HCT116 (cell line): ENCODE measurements at regions of chr2 and their contacts with region 1.

Region 1: DNA sequence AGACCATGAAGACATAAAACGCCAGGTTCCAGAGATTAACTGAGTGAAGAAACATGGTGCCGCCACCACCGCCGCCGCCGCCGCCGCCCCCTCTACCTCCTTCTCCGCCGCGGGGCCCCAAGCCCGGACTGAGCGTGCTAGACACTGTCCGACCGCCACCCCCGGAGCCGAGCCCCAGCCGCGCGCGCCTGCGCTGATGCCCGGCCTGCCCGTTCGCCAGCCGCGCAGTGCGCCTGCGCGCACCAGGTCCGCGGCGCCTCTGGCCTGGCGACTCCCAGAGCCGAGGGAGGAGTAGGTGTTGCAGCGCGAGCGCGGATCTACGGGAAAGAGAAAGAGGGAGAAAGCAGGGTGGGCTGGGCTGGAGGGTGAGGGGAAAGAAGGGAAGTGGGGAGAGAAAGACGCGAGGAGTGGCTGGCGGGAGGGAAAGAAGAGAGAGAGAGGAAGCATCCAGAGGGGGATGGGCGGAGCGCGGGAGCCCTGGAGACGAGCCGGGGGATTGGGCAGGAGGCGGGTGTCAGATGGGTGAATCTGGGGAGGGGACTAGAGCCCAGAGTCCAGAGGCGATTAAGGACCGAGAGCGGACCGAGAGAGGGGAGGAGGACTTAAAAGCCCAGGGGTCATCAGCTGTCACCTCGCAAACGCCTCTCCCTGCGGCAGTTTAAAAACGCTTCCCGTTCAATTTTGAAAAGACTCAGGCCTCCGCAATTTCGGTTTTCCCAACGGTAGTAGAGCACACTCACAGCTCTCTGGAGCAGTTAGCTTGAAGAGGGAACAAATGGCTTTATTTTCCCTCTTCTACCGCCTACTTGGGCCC is at the start of gene PGAP1:
- DNase-seq: peak; percentile 69
- ATAC-seq: peak; percentile 96
- H3K4me3 ChIP-seq: peak within 1 kb of the TSS; percentile 79 to 80
- H3K27ac ChIP-seq: peak within 1 kb of the TSS; percentile 74
- H3K4me1 ChIP-seq: peaks cover 0 to 14% of the 10 kb centered on the region in 2 experiments; a peak in 2 of 4 replicates
- H3K27me3 ChIP-seq: no peaks in the 10 kb centered on the region
- CTCF ChIP-seq: no peak
- POLR2A ChIP-seq: peak; percentile 81
- RAD21 ChIP-seq: no peak
- total RNA-seq, gene PGAP1: 7.1 TPM

Region 2: GRCh38 chr2:196758474-196759377 is 168.0 kb before region 1 on chr2:
- CTCF ChIA-PET with region 1: no interaction called
- POLR2A ChIA-PET with region 1: no interaction called
- RAD21 ChIA-PET with region 1: no interaction called
- intact Hi-C with region 1: no loop called
- DNase-seq: no peak
- ATAC-seq: peak; percentile 54; the same call in 1 of the 2 replicates
- H3K4me3 ChIP-seq: no peak overlapping the region
- H3K27ac ChIP-seq: no peak overlapping the region
- H3K4me1 ChIP-seq: no peaks in the 10 kb centered on the region
- H3K27me3 ChIP-seq: no peaks in the 10 kb centered on the region
- CTCF ChIP-seq: peak in 2 of 3 experiments; percentile 38 to 52; a peak in 3 of 6 replicates
- POLR2A ChIP-seq: no peak
- RAD21 ChIP-seq: peak; percentile 61

Region 3: DNA sequence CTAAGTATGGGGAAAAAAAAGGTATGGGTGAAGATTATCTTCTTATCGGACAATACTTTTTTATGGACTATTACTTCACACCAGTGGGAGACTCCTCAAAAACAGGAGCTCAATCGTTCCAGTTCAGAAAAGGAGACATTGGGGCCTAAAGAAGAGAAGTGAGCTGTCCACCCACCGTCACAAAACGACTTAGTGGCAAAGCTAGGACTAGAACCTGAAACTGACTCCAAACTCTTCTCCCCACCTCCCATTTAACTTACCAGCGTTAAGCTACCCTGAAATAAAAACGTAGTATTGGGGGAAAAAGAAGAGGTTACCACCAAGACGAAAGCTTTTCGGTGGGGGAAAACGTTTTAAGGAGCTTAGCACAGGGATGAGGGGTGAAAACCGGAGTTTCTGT is 127.8 kb before region 1 on chr2:
- CTCF ChIA-PET with region 1: no interaction called
- POLR2A ChIA-PET with region 1: no interaction called
- RAD21 ChIA-PET with region 1: no interaction called
- intact Hi-C with region 1: loop called (anchors 5 kb)
- DNase-seq: no peak
- ATAC-seq: peak; percentile 3; the same call in 1 of the 2 replicates
- H3K4me3 ChIP-seq: peak overlapping the region; percentile 95 to 99
- H3K27ac ChIP-seq: peak overlapping the region; percentile 58
- H3K4me1 ChIP-seq: peaks cover 0 to 18% of the 10 kb centered on the region in 2 experiments; a peak in 3 of 4 replicates
- H3K27me3 ChIP-seq: no peaks in the 10 kb centered on the region
- CTCF ChIP-seq: no peak
- POLR2A ChIP-seq: no peak
- RAD21 ChIP-seq: no peak